A549 (cell line): ENCODE measurements at regions of chr9 and their contacts with region 1.

Region 1: GRCh38 chr9:2824564-2824963 is 19.3 kb downstream of the PUM3 start:
- DNase-seq: peak in 1 of 2 experiments; percentile 55
- ATAC-seq: peak; percentile 85 to 87
- H3K4me3 ChIP-seq: no peak overlapping the region
- H3K27ac ChIP-seq: peak overlapping the region; percentile 42 to 60; a peak in 4 of 6 replicates
- H3K4me1 ChIP-seq: peaks cover 20% of the 10 kb centered on the region; the same call in 2 of the 3 replicates
- CTCF ChIP-seq: peak; percentile 50
- EP300 ChIP-seq: no peak
- POLR2A ChIP-seq: no peak
- RAD21 ChIP-seq: peak; percentile 47 to 54; a peak in 4 of 5 replicates

Region 2: DNA sequence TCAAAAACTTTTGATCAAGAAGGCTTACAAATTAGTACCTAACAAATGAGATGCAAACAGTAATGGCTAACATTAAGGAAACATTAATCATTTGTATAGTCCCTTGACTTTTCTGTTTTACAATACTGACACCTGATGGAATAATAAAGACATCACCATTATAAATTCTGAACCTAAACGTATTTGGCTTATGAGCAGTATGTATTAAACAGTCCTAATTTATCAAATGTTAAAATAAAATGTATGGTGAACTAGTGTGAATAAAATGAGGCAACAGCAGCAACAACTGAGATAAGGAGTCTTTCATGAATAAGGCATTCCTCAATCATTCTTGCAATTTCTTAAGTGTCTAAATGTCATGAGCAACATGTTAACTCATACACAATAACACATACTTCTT is 13.4 kb after region 1 on chr9:
- CTCF ChIA-PET with region 1: interaction called, 19 read pairs
- POLR2A ChIA-PET with region 1: no interaction called
- DNase-seq: peak; percentile 11 to 25
- ATAC-seq: peak; percentile 47 to 62; a peak in 2 of 6 replicates
- H3K4me3 ChIP-seq: 0 out of 3 replicates have a peak overlapping the region, but pooled peaks have one; percentile 22
- H3K27ac ChIP-seq: peak overlapping the region in 1 of 2 experiments; percentile 64; a peak in 4 of 6 replicates
- H3K4me1 ChIP-seq: peaks cover 53% of the 10 kb centered on the region
- CTCF ChIP-seq: peak; percentile 52
- EP300 ChIP-seq: no peak
- POLR2A ChIP-seq: no peak
- RAD21 ChIP-seq: peak; percentile 44 to 74